ENCODE measurements at regions of chrX and their contacts with region 1.

Region 1: GRCh38 chrX:31429915-31430314 is 358.1 kb upstream of the FTHL17 start:
- DNase-seq: no peak
- H3K4me3 ChIP-seq: no peak overlapping the region
- CTCF ChIP-seq: no peak

Region 2: DNA sequence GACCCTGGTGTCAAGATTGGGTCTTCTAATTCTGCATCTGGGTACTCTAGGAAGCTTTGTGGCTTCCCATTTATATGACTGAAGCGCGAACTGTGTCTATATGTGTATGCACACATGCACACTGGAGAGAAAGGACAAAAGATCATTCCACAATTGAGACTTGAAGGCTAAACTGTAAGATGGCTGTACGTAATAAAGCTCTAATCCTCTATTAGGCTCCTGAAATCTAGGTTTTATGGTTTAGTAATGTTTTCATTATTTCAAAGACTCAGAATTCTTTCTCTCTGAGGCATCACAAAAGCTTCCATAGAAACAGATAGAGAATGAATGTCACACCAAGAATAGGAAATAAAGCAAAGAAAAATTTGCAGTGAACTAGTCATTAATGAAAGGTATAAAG is 37.4 kb before region 1 on chrX:
- in situ Hi-C with region 1: loop called (anchors 5 kb)
- DNase-seq: no peak
- H3K4me3 ChIP-seq: no peak overlapping the region
- CTCF ChIP-seq: no peak

Region 3: DNA sequence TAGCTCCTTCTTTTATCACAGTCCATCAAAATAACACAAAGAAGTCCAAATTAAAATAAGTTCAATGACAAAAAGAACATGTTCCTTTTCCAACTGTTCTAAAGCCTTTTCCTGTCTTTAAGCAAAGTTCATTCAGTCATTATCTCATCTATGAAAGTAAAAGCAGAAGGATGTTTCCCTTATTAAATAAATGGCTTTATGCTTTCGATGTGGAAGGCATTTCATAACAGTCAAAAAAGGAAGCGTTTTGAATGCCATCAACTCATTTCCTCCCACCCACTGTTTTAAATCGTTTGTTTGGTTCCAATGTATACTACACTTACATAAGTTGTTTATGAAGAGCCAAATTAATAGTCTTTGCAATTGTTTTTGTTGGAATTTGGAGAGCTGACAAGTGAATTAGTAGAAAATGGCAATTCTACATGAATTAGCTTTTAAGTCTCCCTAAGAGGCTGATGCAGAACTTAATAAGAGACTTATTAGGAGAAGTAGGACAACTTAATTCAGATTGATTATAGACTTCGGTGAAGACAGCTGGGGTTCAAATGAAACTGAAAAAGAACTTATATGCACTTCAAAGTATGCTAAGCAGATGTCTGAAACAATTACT is 34.5 kb after region 1 on chrX:
- in situ Hi-C with region 1: no loop called
- DNase-seq: no peak
- H3K4me3 ChIP-seq: no peak overlapping the region
- CTCF ChIP-seq: no peak